CD4-positive, alpha-beta T cell (primary cell): ENCODE measurements at regions of chr11 and their contacts with region 1.

Region 1: DNA sequence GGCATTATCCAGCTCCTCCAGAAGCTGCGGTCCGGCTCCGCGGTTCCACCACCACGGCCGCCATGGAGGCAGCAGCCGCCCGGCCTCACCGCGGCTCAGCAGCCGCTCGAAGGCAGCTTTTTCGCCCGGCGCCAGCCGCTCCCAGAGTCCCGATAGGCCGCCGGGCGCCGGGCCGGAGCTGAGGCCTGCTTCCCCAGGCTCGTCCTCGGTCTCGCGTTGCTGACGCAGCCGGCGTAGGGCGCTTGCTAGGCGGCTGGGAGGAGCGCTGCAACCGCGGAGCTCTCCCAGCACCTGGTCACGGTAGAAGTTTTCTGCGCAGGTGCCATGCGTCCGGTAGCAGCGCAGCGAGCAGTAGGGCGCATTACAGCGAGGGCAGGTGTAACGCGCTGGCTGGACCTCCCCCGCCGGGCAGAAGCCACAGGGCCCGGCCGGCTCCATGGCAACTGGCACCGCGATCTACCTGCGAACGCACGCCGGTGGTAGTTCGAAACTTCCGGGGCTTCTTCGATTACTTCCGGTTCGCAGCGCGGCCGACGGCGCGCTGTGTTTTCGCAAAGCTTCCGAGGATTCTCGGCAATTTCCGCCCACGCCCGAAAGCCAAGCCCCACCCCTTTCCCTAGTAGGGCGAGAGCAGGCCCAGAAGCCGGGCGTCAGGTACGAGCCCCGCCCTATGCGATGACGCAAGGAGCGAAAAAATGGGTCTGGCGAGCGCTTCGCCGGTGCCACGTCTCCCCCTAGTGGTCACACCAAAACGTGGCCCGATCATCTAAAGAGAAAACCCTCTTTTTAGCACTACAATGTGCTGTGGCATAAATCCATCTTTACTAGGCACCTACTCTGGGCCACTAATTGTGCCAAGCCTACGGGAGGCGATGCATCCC is at the start of gene ZNHIT2:
- DNase-seq: peak; percentile 99 to 100 (median 100)
- ATAC-seq: peak; percentile 63
- H3K4me3 ChIP-seq: peak within 1 kb of the TSS; percentile 82
- H3K4me3 Mint-ChIP-seq: peak within 1 kb of the TSS; percentile 96
- H3K27ac ChIP-seq: peak within 1 kb of the TSS; percentile 79 to 85
- H3K27ac Mint-ChIP-seq: peak within 1 kb of the TSS; percentile 91
- H3K4me1 ChIP-seq: peaks cover 66% of the 10 kb centered on the region
- H3K4me1 Mint-ChIP-seq: peaks cover 52% of the 10 kb centered on the region
- H3K27me3 ChIP-seq: no peaks in the 10 kb centered on the region
- H3K27me3 Mint-ChIP-seq: no peaks in the 10 kb centered on the region
- CTCF ChIP-seq: peak; percentile 88
- total RNA-seq, gene ZNHIT2: 9.0 to 9.5 TPM

Region 2: GRCh38 chr11:64778508-64779346 is 338.7 kb before region 1 on chr11 and contains the start of gene SF1:
- CTCF ChIA-PET with region 1: interaction called, 5 read pairs
- POLR2A ChIA-PET with region 1: interaction called, 14 read pairs
- intact Hi-C with region 1: no loop called
- DNase-seq: peak; percentile 96 to 100 (median 98)
- ATAC-seq: peak; percentile 81
- H3K4me3 ChIP-seq: peak within 1 kb of the TSS; percentile 74
- H3K4me3 Mint-ChIP-seq: peak within 1 kb of the TSS; percentile 95
- H3K27ac ChIP-seq: peak within 1 kb of the TSS; percentile 94 to 98
- H3K27ac Mint-ChIP-seq: peak within 1 kb of the TSS; percentile 99
- H3K4me1 ChIP-seq: peaks cover 52% of the 10 kb centered on the region
- H3K4me1 Mint-ChIP-seq: peaks cover 70% of the 10 kb centered on the region
- H3K27me3 ChIP-seq: no peaks in the 10 kb centered on the region
- H3K27me3 Mint-ChIP-seq: no peaks in the 10 kb centered on the region
- CTCF ChIP-seq: peak; percentile 14
- total RNA-seq, gene SF1: 1,632 to 1,657 TPM

Region 3: DNA sequence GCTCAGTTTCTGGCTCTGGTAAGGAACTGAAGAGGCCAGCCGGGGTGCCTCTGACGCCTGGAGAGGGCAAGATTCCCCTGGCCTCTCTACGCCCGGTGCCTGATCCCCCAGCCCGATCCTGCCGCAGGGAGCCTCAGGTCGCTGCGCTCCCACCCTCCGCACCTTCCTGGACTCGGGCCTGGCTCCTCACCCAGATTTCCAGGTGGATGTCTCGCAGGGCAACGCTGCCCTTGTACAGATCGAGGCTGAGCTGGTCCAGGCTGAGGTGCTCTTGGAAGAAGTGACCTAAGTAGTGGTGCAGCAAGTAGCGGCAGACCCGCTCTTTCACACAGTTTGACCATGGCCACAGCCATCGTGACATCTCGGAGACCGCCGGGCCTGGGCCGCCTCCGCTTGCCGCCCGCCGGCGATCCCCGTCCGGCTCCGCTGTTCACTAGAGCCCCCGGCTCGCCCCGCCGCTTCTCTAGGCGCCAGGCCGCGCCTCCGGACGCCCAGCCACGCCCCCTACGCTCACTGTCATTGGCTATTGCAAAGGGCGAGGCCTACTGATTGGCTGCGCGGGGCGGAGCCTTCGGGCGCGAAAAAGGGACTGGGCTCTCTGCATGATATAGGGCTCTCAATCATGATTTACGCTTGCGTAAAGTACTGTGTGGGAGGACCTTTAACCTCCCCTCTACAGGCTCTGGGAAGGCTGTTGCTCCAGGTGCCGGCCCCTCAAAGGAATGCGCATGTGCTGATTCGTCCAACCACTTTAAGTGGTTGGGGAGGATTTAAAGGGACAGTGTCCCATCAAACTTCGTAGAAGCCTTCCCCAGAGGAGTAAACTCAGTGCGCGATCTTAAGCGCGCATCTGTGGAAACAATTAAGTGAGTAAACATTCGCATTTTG is 200.4 kb before region 1 on chr11 and contains the start of gene ATG2A:
- CTCF ChIA-PET with region 1: no interaction called
- POLR2A ChIA-PET with region 1: no interaction called
- intact Hi-C with region 1: loop called (anchors 5 kb)
- DNase-seq: peak; percentile 97 to 100 (median 99)
- ATAC-seq: peak; percentile 96
- H3K4me3 ChIP-seq: peak within 1 kb of the TSS; percentile 89
- H3K4me3 Mint-ChIP-seq: peak within 1 kb of the TSS; percentile 93
- H3K27ac ChIP-seq: peak within 1 kb of the TSS; percentile 66 to 78
- H3K27ac Mint-ChIP-seq: peak within 1 kb of the TSS; percentile 81
- H3K4me1 ChIP-seq: peaks cover 33% of the 10 kb centered on the region
- H3K4me1 Mint-ChIP-seq: peaks cover 26% of the 10 kb centered on the region
- H3K27me3 ChIP-seq: no peaks in the 10 kb centered on the region
- H3K27me3 Mint-ChIP-seq: no peaks in the 10 kb centered on the region
- CTCF ChIP-seq: no peak
- total RNA-seq, gene ATG2A: 189 to 198 TPM

Region 4: GRCh38 chr11:65013692-65014145 is 103.7 kb before region 1 on chr11:
- CTCF ChIA-PET with region 1: interaction called, 14 read pairs
- POLR2A ChIA-PET with region 1: interaction called, 19 read pairs
- intact Hi-C with region 1: loop called (anchors 1 to 2 kb)
- DNase-seq: peak; percentile 66 to 95 (median 82)
- ATAC-seq: peak; percentile 94
- H3K4me3 ChIP-seq: peak overlapping the region; percentile 87
- H3K4me3 Mint-ChIP-seq: peak overlapping the region; percentile 97
- H3K27ac ChIP-seq: peak overlapping the region; percentile 83 to 98
- H3K27ac Mint-ChIP-seq: peak overlapping the region; percentile 96
- H3K4me1 ChIP-seq: peaks cover 26% of the 10 kb centered on the region
- H3K4me1 Mint-ChIP-seq: peaks cover 26% of the 10 kb centered on the region
- H3K27me3 ChIP-seq: no peaks in the 10 kb centered on the region
- H3K27me3 Mint-ChIP-seq: no peaks in the 10 kb centered on the region
- CTCF ChIP-seq: peak; percentile 74

Region 5: GRCh38 chr11:65053827-65054508 is 63.5 kb before region 1 on chr11:
- CTCF ChIA-PET with region 1: no interaction called
- POLR2A ChIA-PET with region 1: no interaction called
- intact Hi-C with region 1: no loop called
- DNase-seq: peak in 6 of 14 experiments; percentile 9 to 72 (median 45)
- ATAC-seq: peak; percentile 84
- H3K4me3 ChIP-seq: no peak overlapping the region
- H3K4me3 Mint-ChIP-seq: peak overlapping the region; percentile 14
- H3K27ac ChIP-seq: peak overlapping the region; percentile 4 to 24
- H3K27ac Mint-ChIP-seq: peak overlapping the region; percentile 69
- H3K4me1 ChIP-seq: peaks cover 16% of the 10 kb centered on the region
- H3K4me1 Mint-ChIP-seq: peaks cover 14% of the 10 kb centered on the region
- H3K27me3 ChIP-seq: no peaks in the 10 kb centered on the region
- H3K27me3 Mint-ChIP-seq: no peaks in the 10 kb centered on the region
- CTCF ChIP-seq: no peak

Region 6: GRCh38 chr11:65083834-65084597 is 33.4 kb before region 1 on chr11 and contains the starts of genes CDCA5 and ZFPL1:
- CTCF ChIA-PET with region 1: interaction called, 4 read pairs
- POLR2A ChIA-PET with region 1: interaction called, 12 read pairs
- intact Hi-C with region 1: loop called (anchors 1 kb)
- DNase-seq: peak; percentile 92 to 98 (median 95)
- ATAC-seq: peak; percentile 87
- H3K4me3 ChIP-seq: peak within 1 kb of the TSS; percentile 80
- H3K4me3 Mint-ChIP-seq: peak within 1 kb of the TSS; percentile 98
- H3K27ac ChIP-seq: peak within 1 kb of the TSS; percentile 86 to 97
- H3K27ac Mint-ChIP-seq: peak within 1 kb of the TSS; percentile 97
- H3K4me1 ChIP-seq: peaks cover 21% of the 10 kb centered on the region
- H3K4me1 Mint-ChIP-seq: peaks cover 33% of the 10 kb centered on the region
- H3K27me3 ChIP-seq: no peaks in the 10 kb centered on the region
- H3K27me3 Mint-ChIP-seq: no peaks in the 10 kb centered on the region
- CTCF ChIP-seq: no peak
- total RNA-seq, gene CDCA5: 0.77 to 0.84 TPM
- total RNA-seq, gene ZFPL1: 46.2 to 47.7 TPM

Region 7: DNA sequence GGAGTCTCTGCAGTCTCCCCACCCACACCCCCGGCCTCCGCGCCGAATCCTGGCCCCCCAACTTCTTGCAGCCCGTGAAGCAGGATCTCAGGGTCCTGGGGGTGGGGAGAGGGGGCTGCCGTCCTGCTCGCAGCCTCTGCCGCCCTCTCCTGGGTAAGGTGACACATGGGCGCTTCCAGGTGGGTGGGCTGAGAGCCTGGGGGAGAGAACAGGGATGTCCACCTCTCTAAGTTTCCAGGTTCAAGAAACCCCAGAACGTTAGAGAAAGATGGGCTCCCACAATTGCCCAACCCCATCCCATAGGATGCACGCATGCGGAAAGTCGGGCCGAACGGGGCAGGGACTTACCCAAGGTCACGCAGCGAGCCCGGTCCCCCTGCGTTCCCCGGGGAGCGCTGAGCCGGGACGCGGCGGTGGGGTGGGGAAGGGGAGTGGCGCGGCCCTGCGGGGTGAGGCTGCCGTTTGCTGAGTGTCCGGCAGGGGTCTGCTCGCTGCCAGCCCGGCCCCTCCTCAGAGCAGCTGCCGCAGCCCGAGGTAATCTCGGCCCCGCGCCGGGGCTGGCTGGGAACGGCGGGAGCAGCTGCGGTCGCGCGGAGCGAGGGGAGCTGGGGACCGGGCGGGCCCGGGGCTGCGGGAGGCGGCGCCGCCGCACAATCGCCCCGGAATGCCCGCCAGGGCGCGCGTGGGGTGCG is 63.6 kb after region 1 on chr11:
- CTCF ChIA-PET with region 1: interaction called, 6 read pairs
- POLR2A ChIA-PET with region 1: interaction called, 15 read pairs
- intact Hi-C with region 1: loop called in 1 of 2 experiments (anchors 2 kb)
- DNase-seq: peak; percentile 22 to 80 (median 45)
- ATAC-seq: peak; percentile 67
- H3K4me3 ChIP-seq: peak overlapping the region; percentile 97
- H3K4me3 Mint-ChIP-seq: peak overlapping the region; percentile 94
- H3K27ac ChIP-seq: no peak overlapping the region
- H3K27ac Mint-ChIP-seq: peak overlapping the region; percentile 83
- H3K4me1 ChIP-seq: peaks cover 37% of the 10 kb centered on the region
- H3K4me1 Mint-ChIP-seq: peaks cover 12% of the 10 kb centered on the region
- H3K27me3 ChIP-seq: no peaks in the 10 kb centered on the region
- H3K27me3 Mint-ChIP-seq: no peaks in the 10 kb centered on the region
- CTCF ChIP-seq: peak; percentile 65

Region 8: DNA sequence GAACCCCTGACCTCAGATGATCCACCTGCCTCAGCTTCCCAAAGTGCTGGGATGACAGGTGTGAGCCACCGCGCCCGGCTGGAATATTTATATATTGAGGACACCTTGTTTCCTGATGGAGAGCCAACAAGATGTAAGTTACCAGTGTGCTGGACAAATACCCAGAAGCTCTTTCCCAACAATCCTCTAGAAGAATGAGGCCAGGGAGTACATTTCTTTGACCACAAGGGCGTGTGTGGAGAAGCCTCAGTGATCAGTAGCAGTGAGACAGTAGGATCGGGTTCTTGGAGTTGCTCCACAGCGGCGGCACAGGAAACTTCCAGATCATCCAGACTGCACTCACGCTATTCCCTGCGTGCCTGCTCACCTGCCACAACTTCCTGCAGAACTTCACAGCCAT is 134.0 kb after region 1 on chr11:
- CTCF ChIA-PET with region 1: no interaction called
- POLR2A ChIA-PET with region 1: no interaction called
- intact Hi-C with region 1: no loop called
- DNase-seq: no peak
- ATAC-seq: no peak
- H3K4me3 ChIP-seq: no peak overlapping the region
- H3K4me3 Mint-ChIP-seq: no peak overlapping the region
- H3K27ac ChIP-seq: no peak overlapping the region
- H3K27ac Mint-ChIP-seq: no peak overlapping the region
- H3K4me1 ChIP-seq: no peaks in the 10 kb centered on the region
- H3K4me1 Mint-ChIP-seq: no peaks in the 10 kb centered on the region
- H3K27me3 ChIP-seq: no peaks in the 10 kb centered on the region
- H3K27me3 Mint-ChIP-seq: peaks cover 9% of the 10 kb centered on the region
- CTCF ChIP-seq: no peak